A549 (cell line): ENCODE measurements at regions of chr17 and their contacts with region 1.

Region 1: DNA sequence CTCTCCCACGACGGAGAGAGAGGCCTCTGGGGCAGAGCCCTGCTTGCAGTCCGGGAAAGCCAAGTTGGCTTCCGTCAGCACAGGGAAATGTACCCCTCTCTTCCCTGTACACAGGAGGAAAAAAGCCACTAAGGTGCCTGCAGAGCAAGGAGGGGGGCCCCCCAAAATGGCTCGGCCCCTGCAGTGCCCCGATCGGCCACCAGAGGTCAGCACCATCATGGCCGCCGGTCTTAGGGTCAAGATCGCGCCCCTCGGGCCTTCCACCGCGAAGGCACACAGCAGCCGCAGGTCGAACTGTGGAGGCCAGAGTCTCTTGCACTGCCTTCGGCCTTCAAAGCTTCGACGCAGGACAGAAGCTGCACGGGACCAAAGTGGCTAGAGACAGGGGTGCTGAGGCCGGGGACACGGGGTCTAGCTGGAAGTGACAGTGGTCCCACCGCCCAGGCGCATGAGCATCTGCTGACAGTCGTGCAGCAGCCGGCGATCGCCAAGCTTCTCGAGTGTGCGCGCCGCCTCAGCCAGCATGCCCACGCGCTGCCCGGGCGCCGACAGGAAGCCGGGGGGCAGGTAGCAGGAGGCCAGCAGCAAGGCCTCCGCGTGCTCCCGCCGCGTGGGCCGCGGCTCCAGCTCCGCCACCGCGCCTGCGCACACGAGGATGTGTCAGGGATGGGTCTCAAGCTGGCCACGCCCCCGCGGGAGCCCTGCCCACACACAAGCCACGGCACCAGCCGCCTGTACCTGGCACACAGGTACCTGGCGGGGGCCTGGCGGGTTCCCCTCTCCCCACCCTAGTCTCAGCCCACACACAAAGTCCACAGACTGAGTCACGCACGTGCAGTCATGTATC is 24.4 kb downstream of the SREBF1 start:
- DNase-seq: peak; percentile 82 to 89
- ATAC-seq: peak; percentile 1 to 46; a peak in 3 of 6 replicates
- H3K4me3 ChIP-seq: 0 out of 3 replicates have a peak overlapping the region, but pooled peaks have one; percentile 17
- H3K27ac ChIP-seq: peak overlapping the region; percentile 62 to 78
- H3K4me1 ChIP-seq: peaks cover 63% of the 10 kb centered on the region
- CTCF ChIP-seq: peak; percentile 97
- EP300 ChIP-seq: no peak
- POLR2A ChIP-seq: no peak
- RAD21 ChIP-seq: peak; percentile 90 to 94

Region 2: GRCh38 chr17:17613708-17614114 is 198.7 kb before region 1 on chr17:
- CTCF ChIA-PET with region 1: no interaction called
- POLR2A ChIA-PET with region 1: no interaction called
- DNase-seq: peak; percentile 77 to 85
- ATAC-seq: peak; percentile 97 to 98
- H3K4me3 ChIP-seq: no peak overlapping the region
- H3K27ac ChIP-seq: no peak overlapping the region
- H3K4me1 ChIP-seq: no peaks in the 10 kb centered on the region
- CTCF ChIP-seq: peak; percentile 59
- EP300 ChIP-seq: no peak
- POLR2A ChIP-seq: no peak
- RAD21 ChIP-seq: peak; percentile 54 to 55; a peak in 3 of 5 replicates

Region 3: GRCh38 chr17:17712268-17712924 is 100.0 kb before region 1 on chr17:
- CTCF ChIA-PET with region 1: interaction called, 12 read pairs
- POLR2A ChIA-PET with region 1: no interaction called
- DNase-seq: no peak
- ATAC-seq: no peak
- H3K4me3 ChIP-seq: no peak overlapping the region
- H3K27ac ChIP-seq: peak overlapping the region; percentile 94 to 95
- H3K4me1 ChIP-seq: peaks cover 77% of the 10 kb centered on the region
- CTCF ChIP-seq: no peak
- EP300 ChIP-seq: no peak
- POLR2A ChIP-seq: no peak
- RAD21 ChIP-seq: no peak

Region 4: GRCh38 chr17:17783116-17783824 is 29.2 kb before region 1 on chr17:
- CTCF ChIA-PET with region 1: interaction called, 33 read pairs
- POLR2A ChIA-PET with region 1: no interaction called
- DNase-seq: no peak
- ATAC-seq: no peak
- H3K4me3 ChIP-seq: no peak overlapping the region
- H3K27ac ChIP-seq: peak overlapping the region in 1 of 2 experiments; percentile 85; a peak in 2 of 6 replicates
- H3K4me1 ChIP-seq: peaks cover 65% of the 10 kb centered on the region
- CTCF ChIP-seq: no peak
- EP300 ChIP-seq: no peak
- POLR2A ChIP-seq: no peak
- RAD21 ChIP-seq: no peak

Region 5: GRCh38 chr17:17793378-17794125 is 18.9 kb before region 1 on chr17:
- CTCF ChIA-PET with region 1: interaction called, 33 read pairs
- POLR2A ChIA-PET with region 1: no interaction called
- DNase-seq: no peak
- ATAC-seq: no peak
- H3K4me3 ChIP-seq: no peak overlapping the region
- H3K27ac ChIP-seq: no peak overlapping the region
- H3K4me1 ChIP-seq: peaks cover 14% of the 10 kb centered on the region
- CTCF ChIP-seq: no peak
- EP300 ChIP-seq: no peak
- POLR2A ChIP-seq: no peak
- RAD21 ChIP-seq: no peak

Region 6: DNA sequence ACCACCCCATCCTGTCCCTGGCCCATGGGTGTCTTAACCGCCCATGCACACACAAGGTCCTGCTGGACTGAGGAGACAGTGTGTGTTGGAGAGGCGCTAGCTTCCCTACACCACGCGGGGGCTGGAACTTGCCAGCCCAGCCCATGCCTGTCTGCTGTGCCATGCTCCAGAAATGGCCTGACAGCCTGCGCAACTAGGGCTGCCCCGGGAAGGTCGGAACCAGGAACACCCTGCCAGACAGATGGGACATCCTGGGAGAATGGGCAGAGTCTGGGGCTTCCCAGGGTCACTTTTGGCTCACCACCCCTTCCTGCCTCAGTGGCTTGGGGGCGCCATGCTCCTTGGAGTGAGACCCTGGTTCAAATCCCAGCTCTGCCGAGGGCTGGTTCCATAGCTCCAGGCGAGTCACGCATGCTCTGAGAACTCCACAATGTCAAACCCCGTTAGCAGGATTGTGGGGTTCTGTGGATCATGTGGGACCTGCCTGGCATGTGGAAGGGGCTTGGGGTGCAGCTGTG is 11.9 kb before region 1 on chr17:
- CTCF ChIA-PET with region 1: interaction called, 46 read pairs
- POLR2A ChIA-PET with region 1: no interaction called
- DNase-seq: no peak
- ATAC-seq: peak in 1 of 2 experiments; percentile 7; a peak in 2 of 6 replicates
- H3K4me3 ChIP-seq: no peak overlapping the region
- H3K27ac ChIP-seq: no peak overlapping the region
- H3K4me1 ChIP-seq: no peaks in the 10 kb centered on the region
- CTCF ChIP-seq: no peak
- EP300 ChIP-seq: no peak
- POLR2A ChIP-seq: no peak
- RAD21 ChIP-seq: peak in 1 of 2 experiments; percentile 17; a peak in 1 of 5 replicates

Region 7: DNA sequence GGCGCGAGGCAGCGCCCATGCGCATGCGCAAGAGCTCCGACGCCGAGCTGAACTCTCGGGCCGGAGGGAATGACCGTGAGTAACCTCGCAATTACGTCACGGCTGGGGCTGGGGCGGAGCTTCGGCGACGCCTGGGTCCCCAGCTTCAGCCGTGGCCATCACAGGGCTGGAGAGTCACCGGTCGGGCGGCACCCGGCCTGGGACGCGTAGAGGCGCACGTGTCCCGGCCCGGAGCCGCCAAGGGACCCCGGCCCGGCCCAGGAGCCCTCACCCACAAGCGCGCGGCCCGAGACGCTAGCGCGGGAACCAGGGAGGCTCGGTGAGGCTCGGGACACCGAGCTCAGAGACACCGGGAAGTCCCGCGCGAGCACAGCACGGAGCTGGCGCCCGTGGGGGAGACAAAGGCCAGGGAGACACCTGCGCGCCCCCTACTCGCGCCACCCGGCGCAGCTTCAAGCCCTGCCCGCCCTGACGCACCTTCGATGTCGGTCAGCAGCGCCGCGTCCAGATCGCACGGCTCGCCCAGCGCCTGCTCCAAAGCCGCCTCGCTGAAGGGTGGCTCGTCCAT is 23.9 kb after region 1 on chr17:
- CTCF ChIA-PET with region 1: interaction called, 859 read pairs
- POLR2A ChIA-PET with region 1: interaction called, 105 read pairs
- DNase-seq: peak; percentile 96 to 98
- ATAC-seq: peak; percentile 45 to 62
- H3K4me3 ChIP-seq: peak overlapping the region; percentile 85
- H3K27ac ChIP-seq: peak overlapping the region; percentile 98
- H3K4me1 ChIP-seq: peaks cover 82% of the 10 kb centered on the region
- CTCF ChIP-seq: 0 out of 3 replicates have a peak, but pooled peaks have one; percentile 13
- EP300 ChIP-seq: no peak; a peak in 2 of 5 replicates
- POLR2A ChIP-seq: peak; percentile 89
- RAD21 ChIP-seq: no peak

Region 8: DNA sequence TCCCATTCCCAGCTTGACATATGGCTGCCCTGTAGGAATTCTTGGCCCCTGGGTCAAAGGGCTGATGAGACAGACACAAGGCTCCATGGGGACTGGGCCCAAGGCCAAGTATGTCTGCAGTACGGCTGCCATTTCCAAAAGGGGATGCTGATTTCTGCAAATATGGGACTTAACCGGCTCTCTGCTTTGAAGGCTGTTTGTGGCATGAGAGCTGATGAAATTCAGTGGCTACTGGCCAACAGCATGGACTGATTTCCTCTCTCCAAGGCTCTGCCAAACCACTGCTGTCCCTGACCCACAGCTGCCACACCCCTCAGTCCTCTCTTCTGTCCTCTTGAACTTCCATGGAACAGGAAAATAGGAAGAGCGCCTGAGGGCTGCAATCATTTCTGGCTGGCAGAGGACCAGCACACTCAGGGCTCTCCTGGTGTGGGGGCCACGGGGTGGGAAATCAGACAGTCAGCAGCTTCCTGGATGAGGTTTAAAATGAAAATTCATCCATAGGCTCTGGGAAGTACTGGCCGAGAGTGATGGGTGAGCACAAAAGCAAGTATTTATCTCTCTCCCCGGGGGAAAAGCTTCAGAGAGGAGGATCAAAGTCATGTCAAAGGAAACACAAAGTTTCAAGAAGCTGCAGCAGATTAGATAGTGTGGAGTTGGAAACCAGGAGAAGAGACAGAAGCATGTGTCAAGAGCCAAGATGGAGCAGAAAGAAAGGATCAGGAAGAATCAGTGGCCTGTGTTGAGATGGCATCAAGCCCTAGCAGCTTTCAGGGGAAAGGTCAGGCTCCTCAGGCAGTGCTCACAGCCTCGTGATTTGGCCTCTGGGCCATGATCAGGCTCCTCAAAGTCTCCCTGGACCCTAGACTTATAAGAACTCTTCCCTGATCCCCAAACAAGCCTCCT is 88.4 kb after region 1 on chr17:
- CTCF ChIA-PET with region 1: interaction called, 10 read pairs
- POLR2A ChIA-PET with region 1: no interaction called
- DNase-seq: peak; percentile 83 to 85
- ATAC-seq: peak; percentile 83 to 84
- H3K4me3 ChIP-seq: no peak overlapping the region
- H3K27ac ChIP-seq: peak overlapping the region; percentile 74 to 84
- H3K4me1 ChIP-seq: peaks cover 50% of the 10 kb centered on the region
- CTCF ChIP-seq: no peak
- EP300 ChIP-seq: peak; percentile 12 to 78; a peak in 2 of 5 replicates
- POLR2A ChIP-seq: no peak
- RAD21 ChIP-seq: no peak